Ascending aorta (tissue), 2 donors: ENCODE measurements at regions of chr6 and their contacts with region 1.

Region 1: DNA sequence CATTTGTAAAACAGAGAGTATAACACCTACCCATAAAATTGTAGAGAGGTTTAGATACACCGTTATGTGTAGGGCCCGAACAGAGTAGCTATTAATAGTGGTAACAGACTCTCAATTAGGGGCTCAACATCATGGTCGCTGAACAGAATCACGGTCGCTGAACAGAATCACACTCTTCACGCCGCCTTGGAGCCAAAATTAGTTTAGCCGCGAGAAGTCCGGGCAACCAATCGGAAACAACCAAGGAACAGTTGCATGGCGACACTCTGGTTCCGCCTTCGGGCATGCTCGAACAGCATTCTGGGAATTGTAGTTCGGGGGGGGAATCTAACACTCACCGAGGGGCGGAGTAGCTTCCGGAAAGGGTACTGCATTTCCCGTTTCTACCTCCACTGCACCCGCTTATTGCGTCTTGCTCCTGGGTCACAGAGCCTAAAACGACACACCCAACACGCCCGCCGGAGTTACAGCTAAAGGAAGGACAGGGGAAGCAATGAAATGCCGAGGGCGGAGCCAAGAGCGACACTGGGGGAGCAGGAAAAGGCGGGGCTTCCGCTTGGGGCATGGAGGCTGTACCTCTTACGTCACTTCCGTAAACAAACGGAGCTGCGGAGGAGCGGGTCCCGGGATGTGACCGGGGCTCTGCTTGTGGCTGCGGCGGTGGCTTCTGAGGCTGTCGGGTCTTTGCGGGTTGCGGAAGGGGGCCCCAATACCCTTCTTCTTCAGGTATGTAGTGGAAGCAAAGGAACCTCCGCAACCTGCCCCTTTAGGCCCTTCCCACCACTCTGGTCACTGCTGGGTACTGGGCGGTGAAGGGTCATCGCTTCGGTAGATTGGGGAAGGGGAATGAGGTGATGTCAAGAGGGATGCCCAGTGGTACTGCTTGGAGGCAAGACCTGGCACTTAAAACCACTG is at the start of gene CCDC28A:
- DNase-seq: peak; percentile 81 to 97
- H3K4me3 ChIP-seq: peak within 1 kb of the TSS; percentile 67 to 92
- H3K27ac ChIP-seq: peak within 1 kb of the TSS; percentile 84 to 96
- H3K4me1 ChIP-seq: peaks cover 0 to 17% of the 10 kb centered on the region in 2 donors
- H3K27me3 ChIP-seq: no peaks in the 10 kb centered on the region
- CTCF ChIP-seq: no peak
- total RNA-seq, gene CCDC28A: 0.32 TPM

Region 2: DNA sequence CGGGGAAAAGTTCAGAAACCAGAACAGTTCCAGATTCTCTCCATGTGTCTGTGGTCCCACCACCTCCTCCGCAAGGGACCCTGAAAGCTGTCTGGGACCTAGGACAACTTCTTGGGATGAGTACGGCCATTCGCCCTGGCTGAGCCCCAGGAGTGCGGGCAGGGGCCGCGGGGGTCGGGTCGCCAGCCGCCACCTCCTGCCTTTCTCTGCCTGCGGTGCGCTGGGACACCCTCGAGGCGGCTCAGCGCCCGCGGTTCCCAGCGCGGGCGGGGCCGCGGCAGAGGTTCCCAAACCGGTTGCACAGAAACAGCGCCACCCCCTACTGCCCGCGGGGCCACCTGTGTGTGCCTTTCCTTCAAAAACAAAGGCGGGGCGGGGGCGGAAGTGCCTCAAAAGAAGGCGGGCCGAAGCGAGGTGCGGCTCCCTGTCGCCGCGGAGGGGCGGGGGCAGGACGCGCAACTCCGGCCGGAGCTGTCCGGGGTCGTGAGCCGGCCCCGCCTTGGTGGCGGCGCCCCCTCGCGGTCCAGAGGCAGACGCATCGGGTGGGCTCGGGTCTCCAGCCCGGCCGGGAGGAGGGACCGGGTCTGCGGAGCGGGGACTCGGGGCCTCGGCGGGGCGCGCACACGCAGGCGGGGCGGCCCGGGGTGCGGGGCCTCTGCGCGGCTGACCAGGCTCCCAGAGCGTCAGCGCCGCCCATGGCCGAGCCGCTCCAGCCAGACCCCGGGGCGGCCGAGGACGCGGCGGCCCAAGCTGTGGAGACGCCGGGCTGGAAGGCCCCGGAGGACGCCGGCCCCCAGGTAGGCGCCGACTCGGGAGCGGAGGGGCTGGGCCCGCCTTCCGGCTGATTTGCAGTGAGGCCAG is 369.4 kb before region 1 on chr6 and contains the start of gene HEBP2:
- intact Hi-C with region 1: loop called (anchors 10 kb)
- DNase-seq: peak; percentile 78 to 96
- H3K4me3 ChIP-seq: peak within 1 kb of the TSS; percentile 68 to 93
- H3K27ac ChIP-seq: peak within 1 kb of the TSS; percentile 91 to 95
- H3K4me1 ChIP-seq: peaks cover 0 to 5% of the 10 kb centered on the region in 2 donors
- H3K27me3 ChIP-seq: no peaks in the 10 kb centered on the region
- CTCF ChIP-seq: peak; percentile 40 to 49 (median 47)
- total RNA-seq, gene HEBP2: 63.2 TPM

Region 3: GRCh38 chr6:138692058-138692977 is 81.1 kb before region 1 on chr6:
- intact Hi-C with region 1: loop called (anchors 2 kb)
- DNase-seq: peak in 1 of 2 donors; percentile 82
- H3K4me3 ChIP-seq: peak overlapping the region; percentile 90 to 98
- H3K27ac ChIP-seq: peak overlapping the region in 1 of 2 donors; percentile 66
- H3K4me1 ChIP-seq: peaks cover 0 to 3% of the 10 kb centered on the region in 2 donors
- H3K27me3 ChIP-seq: no peaks in the 10 kb centered on the region
- CTCF ChIP-seq: peak; percentile 62 to 78 (median 67)